AG04450 (cell line): ENCODE measurements at regions of chr17 and their contacts with region 1.

Region 1: GRCh38 chr17:43483674-43484372 is at the start of gene DHX8:
- DNase-seq: peak; percentile 97
- H3K4me3 ChIP-seq: peak within 1 kb of the TSS; percentile 99
- H3K27ac ChIP-seq: peak within 1 kb of the TSS; percentile 87
- H3K27me3 ChIP-seq: no peaks in the 10 kb centered on the region
- CTCF ChIP-seq: peak; percentile 100
- polyA plus RNA-seq, gene DHX8: 46.0 and 47.3 TPM in 2 replicates

Region 2: DNA sequence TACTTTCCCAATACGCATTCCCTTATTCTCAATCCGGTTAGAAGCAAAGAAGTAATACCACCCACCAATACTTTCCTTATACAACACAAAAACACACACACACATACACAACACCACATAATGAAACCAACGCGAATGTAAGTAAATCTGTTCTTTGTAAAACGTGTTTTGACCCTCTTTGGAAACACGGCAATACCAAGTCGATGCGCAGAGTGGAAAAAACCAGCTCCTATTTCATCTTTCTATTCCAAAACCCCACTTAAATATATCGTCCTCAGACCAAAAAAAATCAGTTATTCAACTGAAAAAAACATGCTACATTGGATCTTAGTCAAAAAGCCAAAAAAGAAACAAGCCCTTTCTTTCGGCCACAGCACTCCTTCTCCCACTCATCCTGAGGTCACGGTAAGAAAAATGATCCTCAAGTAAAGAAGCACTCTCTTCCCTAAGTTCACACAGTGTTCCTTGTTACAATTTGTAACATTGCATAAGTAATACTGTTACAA is 116.0 kb before region 1 on chr17:
- CTCF ChIA-PET with region 1: interaction called, 11 read pairs
- POLR2A ChIA-PET with region 1: interaction called, 44 read pairs
- DNase-seq: peak; percentile 97
- H3K4me3 ChIP-seq: peak overlapping the region; percentile 35
- H3K27ac ChIP-seq: peak overlapping the region; percentile 97
- H3K27me3 ChIP-seq: no peaks in the 10 kb centered on the region
- CTCF ChIP-seq: no peak

Region 3: GRCh38 chr17:43393944-43394482 is 89.8 kb before region 1 on chr17:
- CTCF ChIA-PET with region 1: interaction called, 395 read pairs
- POLR2A ChIA-PET with region 1: interaction called, 39 read pairs
- DNase-seq: peak; percentile 74
- H3K4me3 ChIP-seq: no peak overlapping the region
- H3K27ac ChIP-seq: no peak overlapping the region
- H3K27me3 ChIP-seq: no peaks in the 10 kb centered on the region
- CTCF ChIP-seq: peak; percentile 94

Region 4: GRCh38 chr17:43406676-43407645 is 76.9 kb before region 1 on chr17:
- CTCF ChIA-PET with region 1: interaction called, 395 read pairs
- POLR2A ChIA-PET with region 1: interaction called, 3 read pairs
- DNase-seq: peak; percentile 54
- H3K4me3 ChIP-seq: no peak overlapping the region
- H3K27ac ChIP-seq: peak overlapping the region; percentile 89
- H3K27me3 ChIP-seq: no peaks in the 10 kb centered on the region
- CTCF ChIP-seq: no peak

Region 5: GRCh38 chr17:43456661-43457361 is 27.0 kb before region 1 on chr17:
- CTCF ChIA-PET with region 1: interaction called, 14 read pairs
- POLR2A ChIA-PET with region 1: no interaction called
- DNase-seq: no peak
- H3K4me3 ChIP-seq: no peak overlapping the region
- H3K27ac ChIP-seq: no peak overlapping the region
- H3K27me3 ChIP-seq: no peaks in the 10 kb centered on the region
- CTCF ChIP-seq: no peak

Region 6: GRCh38 chr17:43608313-43608712 is 124.5 kb after region 1 on chr17:
- CTCF ChIA-PET with region 1: no interaction called
- POLR2A ChIA-PET with region 1: no interaction called
- DNase-seq: no peak
- H3K4me3 ChIP-seq: no peak overlapping the region
- H3K27ac ChIP-seq: no peak overlapping the region
- H3K27me3 ChIP-seq: peaks cover 4% of the 10 kb centered on the region
- CTCF ChIP-seq: no peak

Region 7: GRCh38 chr17:43891851-43892646 is 408.2 kb after region 1 on chr17:
- CTCF ChIA-PET with region 1: no interaction called
- POLR2A ChIA-PET with region 1: no interaction called
- DNase-seq: no peak
- H3K4me3 ChIP-seq: no peak overlapping the region
- H3K27ac ChIP-seq: no peak overlapping the region
- H3K27me3 ChIP-seq: peaks cover 21% of the 10 kb centered on the region
- CTCF ChIP-seq: no peak